ENCODE measurements at regions of chr17 and their contacts with region 1.

Region 1: DNA sequence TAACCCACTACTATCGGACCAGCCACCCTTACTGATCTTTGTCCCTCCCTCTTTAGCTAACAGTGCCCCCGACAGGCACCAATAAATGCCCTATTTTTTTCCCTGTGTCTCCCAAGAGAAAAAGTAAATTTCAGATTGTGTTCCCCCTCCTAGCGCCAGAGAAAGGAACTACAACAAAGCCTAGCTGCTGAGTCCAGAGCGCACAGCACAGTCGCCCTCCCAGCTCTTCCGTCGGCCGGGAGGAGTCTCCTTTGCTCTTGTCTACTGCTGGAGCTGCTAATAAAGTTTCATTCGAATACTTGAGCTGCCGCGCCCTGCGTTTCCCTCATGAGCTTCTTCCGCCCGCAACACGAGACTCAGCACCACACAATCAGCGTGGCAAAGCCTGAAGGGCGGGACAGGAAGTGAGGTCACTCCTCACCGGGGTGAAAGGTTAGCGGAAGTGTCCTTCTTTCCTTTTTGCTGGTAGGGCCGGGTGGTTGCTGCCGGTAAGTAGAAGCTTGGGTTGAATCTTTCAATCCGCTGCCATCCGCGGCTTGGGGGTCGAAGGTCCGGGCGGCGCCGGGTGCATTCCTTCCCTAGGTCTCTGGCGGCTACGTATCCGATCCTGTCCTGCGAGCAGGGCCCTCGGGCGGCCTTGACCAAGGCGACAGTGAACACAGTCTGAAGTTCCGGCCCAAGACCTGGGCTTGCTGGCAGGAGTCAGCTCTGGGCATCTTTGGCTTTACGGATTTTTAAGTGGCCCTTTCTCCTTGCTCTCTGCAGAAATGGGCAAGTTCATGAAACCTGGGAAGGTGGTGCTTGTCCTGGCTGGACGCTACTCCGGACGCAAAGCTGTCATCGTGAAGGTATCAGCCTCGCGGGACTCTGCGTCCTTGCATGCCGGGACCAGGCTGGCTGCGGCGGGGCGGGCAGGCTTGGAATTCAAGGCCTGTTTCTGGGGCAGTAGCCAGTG is at the start of gene RPL27:
- DNase-seq: peak; percentile 99
- H3K4me3 ChIP-seq: peak within 1 kb of the TSS; percentile 56 to 66
- H3K27ac ChIP-seq: peak within 1 kb of the TSS; percentile 78 to 81
- H3K4me1 ChIP-seq: no peaks in the 10 kb centered on the region
- H3K27me3 ChIP-seq: no peaks in the 10 kb centered on the region
- CTCF ChIP-seq: peak; percentile 80 to 99 (median 94)
- POLR2A ChIP-seq: peak; percentile 82
- total RNA-seq, gene RPL27: 571 to 1,082 TPM

Region 2: GRCh38 chr17:42843358-42843934 is 154.8 kb before region 1 on chr17:
- intact Hi-C with region 1: loop called (anchors 5 kb)
- DNase-seq: peak; percentile 33
- H3K4me3 ChIP-seq: no peak overlapping the region
- H3K27ac ChIP-seq: no peak overlapping the region
- H3K4me1 ChIP-seq: no peaks in the 10 kb centered on the region
- H3K27me3 ChIP-seq: no peaks in the 10 kb centered on the region
- CTCF ChIP-seq: peak; percentile 62 to 96 (median 86)
- POLR2A ChIP-seq: no peak

Region 3: DNA sequence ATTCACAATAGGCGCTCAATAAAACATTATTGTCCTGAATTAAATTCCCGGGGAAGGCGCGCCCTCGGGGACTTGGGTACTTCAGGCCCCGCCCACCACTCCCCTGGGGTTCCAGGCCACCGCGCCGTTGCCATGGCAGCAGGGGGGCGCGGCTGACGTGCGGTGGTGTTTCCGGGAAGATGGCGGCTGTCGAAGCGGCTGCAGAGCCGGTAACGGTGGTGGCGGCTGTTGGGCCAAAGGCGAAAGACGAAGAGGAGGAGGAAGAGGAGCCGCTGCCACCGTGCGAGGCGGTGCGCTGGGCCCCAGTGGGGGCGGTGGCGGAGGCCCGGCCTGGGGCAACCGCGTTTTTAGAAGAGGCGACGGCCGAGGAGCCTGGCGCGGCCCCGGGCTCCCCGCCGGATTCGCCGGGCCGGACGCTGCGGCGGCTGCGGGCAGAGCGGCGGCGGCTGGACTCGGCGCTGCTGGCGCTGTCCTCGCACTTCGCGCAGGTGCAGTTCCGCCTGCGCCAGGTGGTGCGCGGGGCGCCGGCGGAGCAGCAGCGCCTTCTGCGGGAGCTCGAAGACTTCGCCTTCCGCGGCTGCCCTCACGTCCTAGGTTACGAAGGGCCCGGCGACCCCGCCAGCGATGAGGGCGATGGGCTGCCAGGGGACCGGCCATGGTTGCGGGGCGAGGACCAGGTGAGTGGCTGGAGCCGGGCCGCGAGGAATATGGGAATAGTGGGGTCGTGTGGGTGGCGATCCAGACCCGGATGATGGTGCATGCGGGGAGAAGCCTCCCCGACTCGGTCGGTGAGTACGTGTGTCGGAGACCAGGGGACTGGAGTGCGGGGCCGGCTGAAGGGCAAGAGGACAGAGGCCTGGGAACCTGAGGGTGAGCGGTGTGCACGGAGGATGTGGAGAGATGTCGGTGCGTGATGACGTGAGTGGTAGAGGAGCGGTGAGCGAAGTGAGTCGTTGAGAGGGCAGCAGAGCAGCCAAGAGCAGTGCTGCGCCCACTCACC is 17.6 kb before region 1 on chr17 and contains the start of gene RUNDC1:
- intact Hi-C with region 1: loop called (anchors 2 kb)
- DNase-seq: peak; percentile 94
- H3K4me3 ChIP-seq: peak within 1 kb of the TSS; percentile 72 to 93
- H3K27ac ChIP-seq: peak within 1 kb of the TSS; percentile 88 to 95
- H3K4me1 ChIP-seq: peaks cover 5% of the 10 kb centered on the region
- H3K27me3 ChIP-seq: no peaks in the 10 kb centered on the region
- CTCF ChIP-seq: peak in 2 of 4 experiments; percentile 37 to 42
- POLR2A ChIP-seq: peak; percentile 61
- total RNA-seq, gene RUNDC1: 26.7 to 28.5 TPM